Breast epithelium (tissue), 4 donors: ENCODE measurements at regions of chr5 and their contacts with region 1.

Region 1: DNA sequence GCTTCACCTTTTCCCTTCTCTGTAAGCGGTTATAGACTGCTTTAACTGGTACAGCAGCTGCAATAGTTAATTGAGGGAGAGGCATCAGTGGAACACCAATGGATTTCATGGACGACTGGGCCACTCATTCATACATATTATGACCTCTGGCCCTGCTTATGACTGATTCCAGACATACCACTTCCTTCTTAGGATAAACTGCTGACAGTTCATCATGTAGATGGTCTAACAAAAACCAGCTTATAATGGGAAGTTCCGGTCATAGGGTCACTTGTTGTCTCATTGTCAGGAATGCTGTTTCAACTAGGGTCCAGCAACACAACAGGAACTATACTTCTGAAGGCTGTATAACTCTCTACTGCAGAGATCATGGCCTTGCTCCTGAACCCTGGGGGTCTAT is 265.2 kb upstream of the RASA1 start:
- DNase-seq: no peak
- H3K4me3 ChIP-seq: no peak overlapping the region
- H3K27ac ChIP-seq: no peak overlapping the region
- H3K4me1 ChIP-seq: no peaks in the 10 kb centered on the region
- H3K27me3 ChIP-seq: no peaks in the 10 kb centered on the region
- CTCF ChIP-seq: no peak
- POLR2A ChIP-seq: no peak

Region 2: DNA sequence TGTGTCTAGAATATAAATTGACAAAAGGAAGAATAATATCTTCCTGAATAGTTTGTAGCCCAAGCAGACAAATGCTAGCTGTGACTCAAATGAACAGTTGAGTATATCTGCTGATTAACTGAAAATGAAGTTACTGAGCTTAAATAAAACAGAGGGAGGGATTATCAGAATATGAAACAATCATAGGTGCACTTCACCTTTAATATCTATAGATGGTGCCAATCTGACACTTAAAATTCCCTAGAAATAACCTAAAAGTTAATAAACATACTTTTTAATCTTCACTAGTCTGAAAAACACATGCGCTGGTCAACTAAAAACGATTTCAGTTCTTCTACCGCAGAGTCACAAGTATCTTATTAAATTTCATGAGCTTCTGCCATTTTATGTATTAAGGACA is 15.6 kb before region 1 on chr5:
- intact Hi-C with region 1: loop called (anchors 1 kb)
- DNase-seq: no peak
- H3K4me3 ChIP-seq: no peak overlapping the region
- H3K27ac ChIP-seq: no peak overlapping the region
- H3K4me1 ChIP-seq: no peaks in the 10 kb centered on the region
- H3K27me3 ChIP-seq: no peaks in the 10 kb centered on the region
- CTCF ChIP-seq: no peak
- POLR2A ChIP-seq: no peak